ENCODE measurements at regions of chr15 and their contacts with region 1.

Region 1: GRCh38 chr15:73633111-73633990 is at the start of gene NPTN:
- DNase-seq: peak; percentile 86
- H3K4me3 ChIP-seq: peak within 1 kb of the TSS; percentile 94
- H3K27me3 ChIP-seq: no peaks in the 10 kb centered on the region
- CTCF ChIP-seq: no peak
- polyA plus RNA-seq, gene NPTN: 308 and 406 TPM in 2 replicates

Region 2: GRCh38 chr15:73298522-73299245 is 334.7 kb before region 1 on chr15:
- CTCF ChIA-PET with region 1: no interaction called
- POLR2A ChIA-PET with region 1: no interaction called
- DNase-seq: no peak
- H3K4me3 ChIP-seq: no peak overlapping the region
- H3K27me3 ChIP-seq: no peaks in the 10 kb centered on the region
- CTCF ChIP-seq: no peak

Region 3: GRCh38 chr15:73524919-73525318 is 108.4 kb before region 1 on chr15:
- CTCF ChIA-PET with region 1: no interaction called
- POLR2A ChIA-PET with region 1: no interaction called
- DNase-seq: no peak
- H3K4me3 ChIP-seq: no peak overlapping the region
- H3K27me3 ChIP-seq: no peaks in the 10 kb centered on the region; the same call in 1 of the 2 replicates
- CTCF ChIP-seq: no peak

Region 4: DNA sequence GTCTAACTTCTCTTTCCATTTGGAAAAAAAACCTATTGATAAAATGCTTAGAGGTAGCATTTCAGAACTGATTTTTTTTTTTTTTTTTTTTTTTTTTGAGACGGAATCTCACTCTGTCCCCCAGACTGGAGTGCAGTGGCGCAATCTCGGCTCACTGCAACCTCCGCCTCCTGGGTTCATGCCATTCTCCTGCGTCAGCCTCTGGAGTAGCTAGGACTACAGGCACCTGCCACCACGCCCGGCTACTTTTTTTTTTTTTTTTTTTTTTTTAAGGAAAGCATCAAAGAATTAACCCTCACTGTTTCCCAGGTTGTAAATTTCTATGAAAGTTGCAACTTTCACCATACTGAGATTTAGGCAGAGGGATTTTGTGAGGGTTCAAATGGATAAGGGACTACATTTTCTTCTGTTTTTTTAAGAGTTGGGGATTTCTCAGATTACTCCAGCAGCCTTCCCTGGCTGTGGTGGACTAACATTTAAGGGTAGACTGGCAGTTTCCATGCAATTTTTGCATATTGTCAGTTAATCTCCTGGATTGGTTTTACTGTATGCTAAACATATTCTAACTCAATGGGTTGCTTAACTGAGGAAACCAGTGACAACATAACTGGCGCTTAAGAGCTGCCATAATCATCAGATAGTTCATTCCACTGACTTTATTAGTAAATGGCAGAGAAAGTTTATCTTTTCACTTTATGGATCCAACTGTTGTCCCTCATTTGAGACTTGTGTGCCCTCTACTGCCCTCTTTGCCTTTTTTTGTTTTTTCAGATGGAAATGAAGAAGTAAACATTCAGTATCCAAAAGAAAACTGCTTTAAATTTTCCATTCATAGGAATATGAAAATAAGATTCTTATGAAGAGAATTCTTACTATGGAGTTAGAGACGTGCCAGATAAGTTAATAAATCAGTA is 93.9 kb before region 1 on chr15:
- CTCF ChIA-PET with region 1: no interaction called
- POLR2A ChIA-PET with region 1: no interaction called
- DNase-seq: no peak
- H3K4me3 ChIP-seq: no peak overlapping the region
- H3K27me3 ChIP-seq: no peaks in the 10 kb centered on the region
- CTCF ChIP-seq: no peak

Region 5: DNA sequence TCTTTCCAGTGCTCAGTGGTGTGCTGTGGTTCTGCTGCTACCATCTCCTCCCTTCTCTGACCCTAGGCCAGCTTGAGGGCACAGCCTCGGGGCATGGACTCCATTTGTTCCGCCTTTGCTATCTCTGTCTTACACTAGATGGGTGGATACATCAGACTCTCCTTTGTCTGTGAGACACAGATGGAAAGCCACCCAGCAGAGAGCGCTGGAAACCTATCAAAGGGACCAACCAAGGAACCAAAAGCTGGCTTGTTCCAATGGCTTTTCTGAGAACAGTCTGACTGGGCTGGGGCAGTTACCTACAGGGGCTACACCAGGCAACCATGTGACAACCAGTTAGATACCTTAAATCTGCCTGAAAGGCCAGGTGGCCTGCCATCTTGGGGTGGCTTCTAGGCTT is 64.0 kb before region 1 on chr15:
- CTCF ChIA-PET with region 1: interaction called, 130 read pairs
- POLR2A ChIA-PET with region 1: no interaction called
- DNase-seq: no peak
- H3K4me3 ChIP-seq: no peak overlapping the region
- H3K27me3 ChIP-seq: no peaks in the 10 kb centered on the region
- CTCF ChIP-seq: no peak

Region 6: DNA sequence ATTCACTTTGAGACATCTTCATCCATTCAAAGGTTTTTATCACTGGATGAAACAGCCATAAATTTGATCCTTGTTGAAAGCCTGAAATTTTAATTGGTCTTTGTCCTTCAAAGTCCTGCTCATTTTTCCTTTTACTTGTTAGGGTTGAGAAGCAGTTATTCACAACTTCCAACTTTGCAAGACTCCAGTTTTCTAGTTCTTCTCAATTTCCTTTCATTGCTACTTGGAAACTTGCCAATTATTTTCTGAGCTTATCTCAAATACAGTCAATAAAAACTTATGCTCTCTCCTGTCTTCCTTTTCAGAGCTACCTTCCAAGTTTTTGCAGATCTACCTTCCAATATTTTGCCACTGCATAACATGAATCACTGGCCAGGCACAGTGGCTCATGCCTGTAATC is 27.1 kb after region 1 on chr15:
- CTCF ChIA-PET with region 1: interaction called, 14 read pairs
- POLR2A ChIA-PET with region 1: no interaction called
- DNase-seq: no peak
- H3K4me3 ChIP-seq: no peak overlapping the region
- H3K27me3 ChIP-seq: no peaks in the 10 kb centered on the region
- CTCF ChIP-seq: no peak

Region 7: GRCh38 chr15:73683777-73684580 is 50.6 kb after region 1 on chr15 and contains the start of gene CD276:
- CTCF ChIA-PET with region 1: interaction called, 33 read pairs
- POLR2A ChIA-PET with region 1: interaction called, 6 read pairs
- DNase-seq: no peak
- H3K4me3 ChIP-seq: peak within 1 kb of the TSS; percentile 90
- H3K27me3 ChIP-seq: no peaks in the 10 kb centered on the region
- CTCF ChIP-seq: no peak
- polyA plus RNA-seq, gene CD276: 61.9 and 107 TPM in 2 replicates

Region 8: DNA sequence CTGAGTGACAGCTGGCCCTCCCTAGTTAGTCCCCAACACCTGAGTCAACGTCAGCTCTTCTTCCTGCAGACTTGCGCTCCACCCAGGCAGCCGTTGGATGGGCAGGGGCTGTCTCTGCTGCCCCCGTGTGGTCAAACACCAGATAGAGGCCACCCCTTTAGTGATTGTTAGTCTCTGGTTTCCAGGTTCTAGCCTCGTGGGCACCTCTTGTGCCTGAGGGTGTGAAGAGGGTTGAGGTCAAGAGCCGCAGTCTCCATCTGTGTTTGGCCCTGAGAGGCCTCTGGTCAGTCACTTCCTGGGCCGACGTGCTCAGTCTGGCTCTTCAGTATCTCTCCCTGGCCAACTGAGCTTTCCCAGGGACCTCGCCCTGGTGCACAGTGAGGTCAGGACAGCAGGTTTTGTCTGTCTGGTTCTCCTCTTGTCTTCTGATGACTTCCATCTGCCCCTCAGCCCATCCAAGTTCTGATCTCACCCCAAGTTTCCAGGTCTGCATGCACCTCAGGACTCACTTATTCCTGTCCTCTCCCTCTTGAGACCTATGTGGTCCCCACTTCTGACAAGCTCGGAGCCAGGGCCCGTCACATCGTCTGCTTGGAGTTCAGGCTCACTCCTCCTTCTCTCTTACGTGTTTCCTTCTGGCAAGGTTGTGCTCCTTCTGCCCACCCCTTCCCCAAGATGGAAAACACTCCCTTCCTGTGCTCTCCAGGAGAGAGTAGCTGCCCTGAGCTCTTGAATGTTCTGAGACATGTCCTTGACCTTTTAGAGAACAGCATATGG is 71.7 kb after region 1 on chr15:
- CTCF ChIA-PET with region 1: interaction called, 151 read pairs
- POLR2A ChIA-PET with region 1: interaction called, 3 read pairs
- DNase-seq: no peak
- H3K4me3 ChIP-seq: no peak overlapping the region
- H3K27me3 ChIP-seq: no peaks in the 10 kb centered on the region
- CTCF ChIP-seq: peak; percentile 90

Measured in BJ (cell line).